ENCODE measurements at regions of chr19 and their contacts with region 1.

Region 1: GRCh38 chr19:8355631-8356402 is 8.1 kb upstream of the ANGPTL4 start:
- DNase-seq: no peak
- ATAC-seq: no peak
- H3K4me3 Mint-ChIP-seq: no peak overlapping the region
- H3K27ac Mint-ChIP-seq: no peak overlapping the region
- H3K4me1 Mint-ChIP-seq: peaks cover 9% of the 10 kb centered on the region
- H3K27me3 Mint-ChIP-seq: peaks cover 7% of the 10 kb centered on the region

Region 2: DNA sequence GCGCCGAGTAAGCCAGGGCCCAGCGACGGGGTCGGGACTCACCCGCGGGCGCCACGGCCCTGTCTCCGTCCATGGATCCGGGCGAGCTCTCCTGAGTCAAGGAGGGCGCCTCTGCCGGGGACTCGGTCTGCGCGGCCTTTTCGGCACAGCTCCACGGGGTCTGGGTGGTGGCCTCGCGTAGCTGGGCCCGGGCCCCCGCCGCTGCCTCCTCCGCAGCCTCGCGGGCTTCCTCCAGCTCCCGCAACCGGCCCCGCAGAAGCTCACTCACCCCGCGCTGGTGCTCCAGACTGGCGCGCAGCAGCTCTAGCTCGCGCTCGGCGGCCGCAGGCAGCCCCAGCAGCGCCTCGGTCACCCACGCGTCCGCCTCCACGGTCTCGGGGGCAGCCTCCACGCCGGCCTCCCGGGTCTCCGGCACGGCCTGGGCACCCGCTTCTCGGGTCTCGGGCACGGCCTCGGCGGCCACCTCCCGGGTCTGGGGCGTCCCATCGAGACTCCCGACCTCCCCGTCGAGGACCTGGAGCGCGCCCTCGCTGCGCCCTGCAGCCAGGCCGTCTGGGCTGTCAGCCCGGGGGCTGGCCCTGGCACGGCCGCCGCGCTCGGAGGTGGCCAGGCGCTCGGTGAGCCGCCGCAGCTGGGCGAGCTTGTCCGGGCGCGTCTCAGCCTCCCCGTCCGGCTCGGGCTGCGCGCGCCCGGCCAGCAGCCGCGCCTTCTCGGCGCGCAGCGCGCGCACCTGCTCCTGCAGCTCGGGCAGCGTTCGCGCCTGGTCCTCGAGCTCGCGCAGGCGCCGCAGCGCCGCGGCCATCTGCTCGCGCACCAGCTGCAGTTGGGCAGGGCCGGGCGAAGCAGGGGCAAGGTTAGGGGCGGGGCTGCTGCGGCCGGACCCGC is 21.1 kb before region 1 on chr19:
- CTCF ChIA-PET with region 1: interaction called, 46 read pairs
- POLR2A ChIA-PET with region 1: interaction called, 3 read pairs
- DNase-seq: peak; percentile 60
- ATAC-seq: peak; percentile 63
- H3K4me3 Mint-ChIP-seq: peak overlapping the region; percentile 31
- H3K27ac Mint-ChIP-seq: no peak overlapping the region
- H3K4me1 Mint-ChIP-seq: peaks cover 14% of the 10 kb centered on the region
- H3K27me3 Mint-ChIP-seq: peaks cover 24% of the 10 kb centered on the region

Region 3: DNA sequence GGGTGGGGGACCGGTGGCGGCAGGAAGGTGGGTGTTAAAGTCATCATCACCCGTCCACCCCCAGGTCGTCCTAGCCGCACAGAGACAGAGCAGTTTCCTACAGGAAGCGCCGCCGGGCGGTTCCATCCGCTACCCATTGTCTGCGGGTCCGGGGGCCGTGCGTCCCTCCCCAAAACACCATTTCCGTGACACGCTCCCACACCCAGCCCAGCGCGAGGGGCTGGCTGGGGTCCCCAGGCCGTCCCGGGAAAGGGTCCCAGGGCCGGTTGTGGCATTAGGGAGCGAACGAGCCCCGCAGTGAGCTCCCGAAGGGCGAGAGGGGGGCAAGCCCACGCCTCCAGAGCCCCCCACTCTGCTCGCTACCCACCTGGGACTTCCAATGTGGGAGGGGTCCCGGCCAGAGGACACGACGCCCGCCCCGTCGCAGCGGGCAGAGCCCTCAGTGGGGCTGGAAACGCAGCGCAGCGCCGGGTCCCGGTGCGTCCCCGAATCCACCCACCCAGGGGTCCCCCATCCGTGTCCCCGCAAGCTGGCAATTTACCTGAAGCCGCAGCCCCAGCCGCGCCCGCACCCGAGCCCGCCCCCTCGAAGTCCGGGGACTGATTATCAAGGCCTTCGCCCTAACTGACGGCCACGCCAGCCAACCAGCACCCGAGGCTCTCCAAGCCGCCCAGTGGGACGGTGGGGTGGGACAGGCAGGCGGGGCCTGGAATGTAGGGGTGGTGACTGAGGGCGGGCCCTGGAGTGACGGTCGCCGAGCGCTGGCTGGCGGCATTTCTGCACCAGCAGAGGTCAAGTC is 12.9 kb before region 1 on chr19 and contains the start of gene KANK3:
- CTCF ChIA-PET with region 1: interaction called, 46 read pairs
- POLR2A ChIA-PET with region 1: no interaction called
- DNase-seq: peak; percentile 96
- ATAC-seq: peak; percentile 100
- H3K4me3 Mint-ChIP-seq: peak within 1 kb of the TSS; percentile 77
- H3K27ac Mint-ChIP-seq: peak within 1 kb of the TSS; percentile 72
- H3K4me1 Mint-ChIP-seq: peaks cover 20% of the 10 kb centered on the region
- H3K27me3 Mint-ChIP-seq: peaks cover 24% of the 10 kb centered on the region
- total RNA-seq, gene KANK3: 3.4 to 3.5 TPM

Region 4: DNA sequence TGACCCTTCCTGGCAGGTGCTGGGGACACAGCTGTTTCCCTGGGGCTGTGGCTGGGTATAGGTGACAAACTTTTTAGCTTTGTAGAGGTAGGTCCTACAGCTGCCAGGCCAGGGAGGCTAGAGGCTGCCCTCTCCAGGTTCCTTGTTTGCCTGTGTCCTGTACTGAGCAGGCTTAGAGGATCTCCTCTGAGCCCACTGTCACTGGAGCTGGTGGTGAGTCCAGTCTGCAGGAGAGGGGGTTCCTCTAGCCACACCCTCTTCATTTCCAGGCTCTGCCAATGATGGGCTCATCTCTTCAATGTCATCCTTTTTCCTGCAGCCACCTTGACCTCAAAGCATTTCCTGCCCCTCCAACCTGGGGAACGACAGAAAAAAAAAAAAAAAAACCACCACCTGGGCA is 21.8 kb after region 1 on chr19:
- CTCF ChIA-PET with region 1: interaction called, 27 read pairs
- POLR2A ChIA-PET with region 1: no interaction called
- DNase-seq: no peak
- ATAC-seq: peak; percentile 55
- H3K4me3 Mint-ChIP-seq: no peak overlapping the region
- H3K27ac Mint-ChIP-seq: peak overlapping the region; percentile 25
- H3K4me1 Mint-ChIP-seq: peaks cover 25% of the 10 kb centered on the region
- H3K27me3 Mint-ChIP-seq: no peaks in the 10 kb centered on the region

Region 5: GRCh38 chr19:8389891-8390616 is 34.2 kb after region 1 on chr19 and contains the start of gene RAB11B:
- CTCF ChIA-PET with region 1: interaction called, 45 read pairs
- POLR2A ChIA-PET with region 1: interaction called, 3 read pairs
- DNase-seq: peak; percentile 100
- ATAC-seq: peak; percentile 96
- H3K4me3 Mint-ChIP-seq: peak within 1 kb of the TSS; percentile 95
- H3K27ac Mint-ChIP-seq: peak within 1 kb of the TSS; percentile 99
- H3K4me1 Mint-ChIP-seq: peaks cover 30% of the 10 kb centered on the region
- H3K27me3 Mint-ChIP-seq: no peaks in the 10 kb centered on the region
- total RNA-seq, gene RAB11B: 92.4 to 92.7 TPM

Region 6: GRCh38 chr19:8396563-8397203 is 40.9 kb after region 1 on chr19:
- CTCF ChIA-PET with region 1: interaction called, 45 read pairs
- POLR2A ChIA-PET with region 1: no interaction called
- DNase-seq: peak; percentile 89
- ATAC-seq: peak; percentile 85
- H3K4me3 Mint-ChIP-seq: no peak overlapping the region
- H3K27ac Mint-ChIP-seq: peak overlapping the region; percentile 71
- H3K4me1 Mint-ChIP-seq: peaks cover 40% of the 10 kb centered on the region
- H3K27me3 Mint-ChIP-seq: no peaks in the 10 kb centered on the region

Region 7: DNA sequence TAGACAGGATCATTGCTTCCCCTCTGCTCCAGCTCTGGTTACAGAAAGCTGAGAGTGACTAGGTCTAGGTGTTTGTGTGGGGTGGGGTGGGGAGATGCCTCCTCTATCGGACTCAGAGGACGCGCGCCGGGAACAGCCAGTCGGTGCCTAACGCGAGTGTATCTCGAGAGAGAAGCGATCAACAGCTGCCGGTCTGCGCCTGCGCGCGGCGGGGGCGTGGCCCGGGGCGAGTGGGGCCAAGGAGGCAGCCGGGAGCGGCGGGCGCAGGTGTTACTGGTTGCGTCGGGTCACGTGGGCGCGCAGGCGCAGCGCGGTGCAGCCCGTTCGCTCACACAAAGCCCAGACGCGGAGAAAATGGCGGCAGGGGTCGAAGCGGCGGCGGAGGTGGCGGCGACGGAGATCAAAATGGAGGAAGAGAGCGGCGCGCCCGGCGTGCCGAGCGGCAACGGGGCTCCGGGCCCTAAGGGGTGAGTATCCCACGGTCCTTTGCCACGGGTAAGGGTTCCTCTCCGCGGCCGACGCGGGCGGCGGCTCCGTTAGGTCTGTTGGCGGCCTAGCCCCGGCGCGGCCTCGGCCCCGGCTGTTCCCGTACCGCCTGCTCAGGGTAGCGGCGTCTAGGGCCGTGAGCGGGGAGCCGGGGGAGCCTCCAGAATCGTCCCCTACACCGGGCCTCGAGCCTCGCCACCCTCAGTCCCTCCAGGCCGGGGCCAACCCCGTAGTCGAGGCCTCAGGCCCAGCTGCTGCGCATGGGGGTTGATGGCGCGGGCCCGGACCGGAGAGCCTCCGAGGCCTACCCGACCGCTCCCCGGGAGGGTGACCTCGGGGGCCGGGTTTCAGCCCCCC is 89.0 kb after region 1 on chr19 and contains the start of gene HNRNPM:
- CTCF ChIA-PET with region 1: interaction called, 15 read pairs
- POLR2A ChIA-PET with region 1: no interaction called
- DNase-seq: peak; percentile 100
- ATAC-seq: peak; percentile 96
- H3K4me3 Mint-ChIP-seq: peak within 1 kb of the TSS; percentile 94
- H3K27ac Mint-ChIP-seq: peak within 1 kb of the TSS; percentile 92
- H3K4me1 Mint-ChIP-seq: peaks cover 40% of the 10 kb centered on the region
- H3K27me3 Mint-ChIP-seq: no peaks in the 10 kb centered on the region
- total RNA-seq, gene HNRNPM: 283 to 291 TPM